GM13976 (cell line): ENCODE measurements at regions of chr1 and their contacts with region 1.

Region 1: DNA sequence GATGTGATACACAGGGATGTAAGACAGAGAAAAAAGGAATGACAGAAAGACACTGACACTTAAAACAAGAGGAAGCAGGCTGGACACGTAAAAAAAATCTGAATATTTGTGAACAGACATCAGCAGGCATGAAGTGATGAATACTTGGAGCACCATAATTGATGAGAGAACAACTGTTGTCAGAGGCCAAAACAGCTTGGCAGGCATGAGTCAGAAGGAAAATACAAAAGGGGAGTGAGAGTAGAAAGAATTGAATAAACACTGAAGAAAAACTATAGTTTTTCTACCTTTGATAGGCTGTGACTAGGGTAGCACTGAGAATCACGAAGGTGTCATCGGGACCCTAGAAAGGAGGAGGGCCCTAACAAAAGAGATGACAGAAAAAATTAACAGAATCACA is 21.6 kb upstream of the GUCA2A start:
- DNase-seq: no peak
- CTCF ChIP-seq: no peak

Region 2: GRCh38 chr1:42319128-42319851 is 133.1 kb after region 1 on chr1:
- in situ Hi-C with region 1: loop called (anchors 10 kb)
- DNase-seq: no peak
- CTCF ChIP-seq: no peak